ENCODE measurements at regions of chr22 and their contacts with region 1.

Region 1: DNA sequence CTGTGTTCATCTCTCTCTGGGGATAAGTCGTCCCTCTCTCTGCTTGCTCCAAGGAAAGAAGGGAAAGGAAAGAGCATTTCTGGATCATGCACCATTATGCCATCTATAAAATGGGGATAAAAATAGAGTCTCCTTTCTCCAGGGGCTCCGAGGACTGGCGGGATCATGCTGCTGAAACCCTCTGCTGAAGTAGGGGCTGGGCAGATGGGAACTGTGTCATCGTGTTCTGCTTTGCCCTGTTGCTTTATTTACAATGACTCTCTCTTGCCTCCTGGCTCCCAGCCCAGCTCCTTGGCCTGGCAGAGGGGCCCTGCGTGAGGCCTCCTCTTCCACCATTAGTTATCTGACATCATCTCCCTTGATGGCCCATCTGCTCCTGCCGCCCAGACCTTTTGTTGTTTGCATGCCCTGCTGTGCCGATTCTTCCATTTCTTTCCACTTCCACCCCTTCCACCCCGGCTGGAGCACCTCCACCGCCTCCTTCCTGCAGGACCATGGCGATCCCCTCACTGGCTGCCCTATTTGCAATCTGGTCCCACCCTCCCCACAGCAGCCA is 200.9 kb downstream of the MYO18B start:
- DNase-seq: peak; percentile 45 to 97 (median 66)
- H3K4me3 ChIP-seq: no peak overlapping the region
- H3K27ac ChIP-seq: peak overlapping the region in 46 of 59 donors; percentile 0 to 77 (median 50)
- H3K27me3 ChIP-seq: no peaks in the 10 kb centered on the region
- CTCF ChIP-seq: no peak

Region 2: GRCh38 chr22:25827415-25827814 is 115.5 kb before region 1 on chr22:
- intact Hi-C with region 1: no loop called
- DNase-seq: peak in 3 of 10 donors; percentile 38 to 55 (median 42)
- H3K4me3 ChIP-seq: no peak overlapping the region
- H3K27ac ChIP-seq: peak overlapping the region in 44 of 59 donors; percentile 2 to 80 (median 52)
- H3K27me3 ChIP-seq: peaks cover 0 to under 1% (median 0%) of the 10 kb centered on the region in 45 donors
- CTCF ChIP-seq: no peak

Region 3: GRCh38 chr22:25903294-25903693 is 39.6 kb before region 1 on chr22:
- intact Hi-C with region 1: loop called in 1 of 2 experiments (anchors 5 kb)
- DNase-seq: no peak
- H3K4me3 ChIP-seq: no peak overlapping the region
- H3K27ac ChIP-seq: no peak overlapping the region
- H3K27me3 ChIP-seq: peaks cover 0 to 8% (median 0%) of the 10 kb centered on the region in 45 donors
- CTCF ChIP-seq: peak in 1 of 56 donors; percentile 10